Motor neuron (in vitro differentiated cells): ENCODE measurements at regions of chr18 and their contacts with region 1.

Region 1: GRCh38 chr18:57881818-57882413 is 78.8 kb upstream of the ATP8B1 start:
- ATAC-seq: peak; percentile 97 to 100 (median 99)
- H3K4me3 ChIP-seq: no peak overlapping the region
- H3K27ac ChIP-seq: no peak overlapping the region
- H3K4me1 ChIP-seq: peaks cover 3 to 4% of the 10 kb centered on the region in 2 donors

Region 2: DNA sequence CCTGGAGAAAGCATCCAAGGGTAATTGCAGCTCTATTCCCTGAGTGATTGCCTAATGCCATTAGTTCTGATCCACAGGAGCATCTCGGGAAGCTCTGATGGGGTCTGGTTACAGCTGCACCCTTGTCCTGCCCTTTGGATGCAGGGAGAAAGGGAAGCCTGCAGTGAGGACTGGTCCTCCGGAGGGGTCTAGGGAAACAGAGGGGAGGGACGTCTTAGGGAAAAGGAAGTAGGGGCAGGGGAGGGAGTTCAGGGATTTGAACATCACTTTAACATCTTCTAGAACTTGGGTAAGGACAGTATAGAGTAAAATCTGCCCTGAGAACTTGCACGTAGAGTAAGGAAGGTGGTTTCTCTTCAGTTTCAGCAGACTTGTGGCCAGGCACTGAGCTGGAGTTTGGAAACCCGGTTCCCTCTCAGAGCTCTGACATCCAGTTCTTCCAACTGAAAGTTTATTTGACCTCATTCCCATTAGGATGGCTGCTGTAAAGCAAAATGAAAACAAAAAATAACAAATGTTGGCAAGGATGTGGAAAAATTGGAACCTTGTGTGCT is 426.3 kb before region 1 on chr18:
- in situ Hi-C with region 1: no loop called
- ATAC-seq: peak in 1 of 8 experiments; percentile 24
- H3K4me3 ChIP-seq: no peak overlapping the region
- H3K27ac ChIP-seq: no peak overlapping the region
- H3K4me1 ChIP-seq: no peaks in the 10 kb centered on the region

Region 3: GRCh38 chr18:57516056-57516455 is 365.9 kb before region 1 on chr18:
- in situ Hi-C with region 1: no loop called
- ATAC-seq: no peak
- H3K4me3 ChIP-seq: no peak overlapping the region
- H3K27ac ChIP-seq: no peak overlapping the region
- H3K4me1 ChIP-seq: peaks cover 0 to 2% of the 10 kb centered on the region in 2 donors

Region 4: DNA sequence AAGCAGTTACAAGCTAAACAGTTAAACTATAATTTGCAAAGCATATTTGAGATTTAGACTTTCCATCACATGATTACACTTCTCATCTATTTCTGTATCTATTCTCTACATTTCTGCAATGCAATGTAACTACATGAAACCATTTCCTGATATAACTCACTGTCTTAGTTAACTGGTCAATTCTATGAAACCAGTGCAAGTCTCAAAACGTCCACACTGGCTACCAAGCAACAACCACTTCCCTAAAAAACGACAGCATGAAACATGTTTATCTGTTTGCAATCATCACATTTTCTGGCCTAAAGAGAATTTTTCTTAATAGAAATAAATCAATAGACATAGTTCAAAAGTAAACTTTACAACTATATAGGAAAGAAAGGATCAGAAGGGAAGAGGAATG is 312.8 kb before region 1 on chr18:
- in situ Hi-C with region 1: no loop called
- ATAC-seq: no peak
- H3K4me3 ChIP-seq: no peak overlapping the region
- H3K27ac ChIP-seq: no peak overlapping the region
- H3K4me1 ChIP-seq: peaks cover 0 to 7% of the 10 kb centered on the region in 2 donors

Region 5: DNA sequence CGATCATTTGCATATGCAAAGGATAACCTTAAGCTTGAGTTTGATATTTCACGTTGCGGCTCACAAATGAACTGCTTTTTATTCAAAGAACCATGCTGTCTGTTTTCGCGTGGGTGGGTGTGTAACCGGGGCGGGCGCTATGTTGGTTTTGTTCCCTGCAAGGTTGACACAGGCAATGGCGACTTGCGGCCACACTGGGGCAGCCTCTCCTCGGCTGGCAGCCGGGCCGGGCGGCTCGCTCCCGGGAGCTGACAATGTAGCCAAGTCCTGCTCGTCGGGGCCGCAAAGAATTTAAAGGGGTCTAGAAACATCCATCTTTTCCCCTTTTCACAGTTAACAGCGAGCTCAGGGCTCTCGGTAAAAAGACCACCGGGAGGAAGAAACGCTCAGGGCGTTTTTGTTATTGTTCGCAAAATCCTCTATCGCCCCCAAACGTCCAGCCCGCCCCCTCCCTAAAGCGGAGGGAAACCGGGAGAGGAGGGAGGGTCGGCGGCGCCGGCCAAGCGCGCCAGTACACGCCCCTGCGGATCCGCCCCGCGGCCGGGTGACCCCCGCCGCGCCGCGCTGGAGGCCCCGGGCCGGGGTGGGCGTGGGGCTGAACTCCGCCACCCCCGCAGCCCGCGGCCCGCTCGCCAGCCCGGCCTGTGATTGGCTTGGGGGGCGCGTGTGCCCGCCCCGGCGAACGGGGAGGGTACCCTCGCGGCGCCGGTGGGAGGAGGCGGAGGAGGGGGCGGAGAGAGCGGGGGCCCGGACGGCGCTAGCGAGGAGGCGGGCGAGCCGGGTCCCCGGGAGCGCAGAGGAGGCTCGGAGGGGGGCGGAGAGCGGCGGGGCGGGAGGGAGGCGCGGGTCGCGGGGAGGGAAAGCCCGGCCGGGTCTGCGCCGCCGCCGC is 161.8 kb after region 1 on chr18 and contains the start of gene NEDD4L:
- in situ Hi-C with region 1: loop called in 2 of 9 experiments (anchors 25 kb)
- ATAC-seq: peak; percentile 59 to 82 (median 80)
- H3K4me3 ChIP-seq: peak within 1 kb of the TSS; percentile 50 to 87 (median 67)
- H3K27ac ChIP-seq: peak within 1 kb of the TSS; percentile 64 to 80
- H3K4me1 ChIP-seq: peaks cover 12 to 15% of the 10 kb centered on the region in 2 donors
- total RNA-seq, gene NEDD4L: 51.2 to 394 (median 65.0) TPM

Region 6: DNA sequence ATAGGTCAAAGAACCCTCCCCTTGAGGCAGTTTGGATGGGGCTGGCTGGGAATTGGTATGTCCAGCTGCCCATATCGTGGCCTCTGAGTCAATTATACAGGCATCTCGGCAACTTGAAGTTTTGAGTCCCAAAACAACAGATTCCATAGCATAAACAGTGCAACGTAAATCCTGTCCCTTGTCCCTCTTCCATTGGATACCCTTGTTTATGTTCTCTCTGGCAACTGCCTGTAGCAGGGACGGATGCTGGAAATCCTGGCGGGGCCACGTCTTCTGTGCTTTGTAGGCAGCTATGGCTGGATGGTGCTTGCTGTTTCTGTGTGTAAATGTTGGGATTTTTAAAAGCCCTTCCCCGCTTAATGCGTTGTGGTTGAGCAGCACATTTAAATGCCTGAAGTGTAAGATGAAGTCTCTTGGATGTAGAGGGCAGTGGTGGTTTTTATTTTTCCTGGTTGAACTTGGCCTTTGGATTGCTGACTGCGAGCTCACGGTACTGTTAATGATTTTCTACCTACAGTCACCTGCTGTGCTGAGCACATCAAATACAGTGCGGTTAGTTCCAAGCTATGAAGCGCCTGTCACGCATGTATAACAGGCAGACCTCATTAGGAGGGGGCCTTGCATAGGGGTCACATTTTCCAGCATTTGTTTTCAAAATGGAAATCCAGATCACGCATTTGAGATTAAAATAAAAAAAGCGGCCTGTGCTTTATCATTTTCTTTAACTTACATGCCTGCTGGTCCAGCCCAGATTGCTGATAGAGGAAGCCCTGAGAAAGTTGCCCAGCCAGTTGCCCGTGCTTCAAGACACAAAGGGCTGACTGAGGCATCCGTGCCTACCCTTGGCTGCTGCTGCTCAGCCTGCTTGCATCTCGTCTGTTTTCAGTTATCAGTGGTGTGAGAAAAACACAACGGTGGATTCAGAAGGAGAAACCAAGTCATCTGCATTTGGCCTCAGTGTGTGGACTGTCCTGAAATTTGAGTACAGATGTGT is 246.8 kb after region 1 on chr18:
- in situ Hi-C with region 1: no loop called
- ATAC-seq: peak in 5 of 8 experiments; percentile 39 to 87 (median 55)
- H3K4me3 ChIP-seq: no peak overlapping the region
- H3K27ac ChIP-seq: no peak overlapping the region
- H3K4me1 ChIP-seq: peaks cover 0 to 10% of the 10 kb centered on the region in 2 donors

Region 7: DNA sequence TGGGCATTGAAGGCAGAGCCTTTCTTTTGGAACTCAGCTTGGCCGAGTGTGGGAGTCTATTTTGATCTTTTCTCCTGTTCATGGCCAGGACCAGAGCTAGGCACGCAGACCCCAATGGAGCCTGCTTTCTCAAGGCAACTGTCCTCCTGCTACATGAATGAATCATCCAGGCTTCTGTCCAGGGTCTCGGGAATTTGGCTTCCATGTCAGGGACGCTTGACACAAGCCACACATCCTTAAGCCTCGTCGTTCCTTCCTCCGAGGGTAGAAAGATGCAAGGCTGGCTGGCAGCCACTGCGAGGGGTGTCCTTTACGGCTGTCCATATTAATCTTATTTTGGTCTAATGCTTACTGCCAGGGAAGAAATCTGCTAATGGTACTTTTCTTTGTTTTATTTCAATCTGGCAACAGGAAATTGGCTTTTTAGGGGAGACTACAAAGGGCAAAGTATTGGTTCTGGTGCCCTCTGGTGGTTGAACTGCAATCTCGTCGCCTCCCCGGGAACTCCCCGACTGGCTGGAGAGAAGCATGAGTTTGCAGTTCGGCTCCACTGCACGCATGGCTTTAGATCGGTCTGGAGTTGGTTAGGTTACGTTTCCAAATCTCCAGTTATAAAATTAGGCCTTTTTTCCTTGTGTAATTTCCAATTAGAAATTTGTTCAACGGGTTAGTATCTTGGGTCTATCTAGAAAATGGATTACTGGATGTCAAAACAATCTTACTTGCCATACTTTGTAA is 611.8 kb after region 1 on chr18:
- in situ Hi-C with region 1: loop called in 1 of 9 experiments (anchors 25 kb)
- ATAC-seq: peak; percentile 87 to 98 (median 96)
- H3K4me3 ChIP-seq: no peak overlapping the region
- H3K27ac ChIP-seq: no peak overlapping the region
- H3K4me1 ChIP-seq: peaks cover 0 to 10% of the 10 kb centered on the region in 2 donors

Region 8: GRCh38 chr18:58768293-58768974 is 886.5 kb after region 1 on chr18:
- in situ Hi-C with region 1: loop called in 4 of 9 experiments (anchors 25 kb)
- ATAC-seq: peak; percentile 95 to 99 (median 97)
- H3K4me3 ChIP-seq: peak overlapping the region; percentile 2 to 30 (median 14)
- H3K27ac ChIP-seq: no peak overlapping the region
- H3K4me1 ChIP-seq: peaks cover 7 to 9% of the 10 kb centered on the region in 2 donors